Activated CD8-positive, alpha-beta T cell treated with anti-CD3 and anti-CD28 coated beads for 36 hours (primary cell): ENCODE measurements at regions of chr17 and their contacts with region 1.

Region 1: DNA sequence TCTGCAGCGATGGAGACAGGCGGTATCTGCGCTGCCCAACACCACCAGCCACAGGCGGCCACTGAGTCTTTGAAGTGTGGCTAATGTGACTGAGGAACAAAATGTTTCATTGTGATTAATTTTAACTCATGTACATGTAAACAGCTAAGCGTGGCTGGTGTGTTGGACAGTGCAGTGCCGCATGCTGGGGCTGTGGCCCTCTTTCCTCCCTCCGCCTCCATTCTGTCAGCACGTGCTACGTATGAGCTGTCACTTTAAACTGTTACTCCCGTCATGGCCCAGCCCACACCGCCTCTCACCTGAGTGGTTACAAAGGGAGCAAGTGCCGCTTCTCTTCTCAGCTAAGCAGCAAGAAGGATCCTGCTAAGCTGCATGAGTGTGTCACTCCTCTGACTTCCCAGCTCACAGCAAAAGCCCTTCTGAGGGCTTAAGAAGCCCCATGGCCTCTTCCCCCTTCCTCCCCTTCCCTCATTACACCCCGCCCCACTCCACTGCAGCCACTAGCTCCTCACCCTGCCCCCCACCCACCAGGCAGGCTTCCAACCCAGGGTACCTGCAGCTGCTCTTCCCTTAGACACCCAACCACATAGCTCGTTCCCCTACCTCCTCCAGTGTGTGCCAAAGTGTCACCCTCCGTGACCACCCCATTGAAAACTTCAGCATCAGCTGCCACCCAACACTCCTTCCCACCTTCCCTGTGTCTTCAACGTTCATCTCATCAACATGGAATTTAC is 15.0 kb downstream of the HASPIN start:
- DNase-seq: peak; percentile 93
- ATAC-seq: peak; percentile 87
- H3K4me3 Mint-ChIP-seq: no peak overlapping the region
- H3K27ac Mint-ChIP-seq: peak overlapping the region; percentile 26
- H3K4me1 Mint-ChIP-seq: peaks cover 33% of the 10 kb centered on the region
- H3K27me3 Mint-ChIP-seq: no peaks in the 10 kb centered on the region
- CTCF ChIP-seq: no peak

Region 2: DNA sequence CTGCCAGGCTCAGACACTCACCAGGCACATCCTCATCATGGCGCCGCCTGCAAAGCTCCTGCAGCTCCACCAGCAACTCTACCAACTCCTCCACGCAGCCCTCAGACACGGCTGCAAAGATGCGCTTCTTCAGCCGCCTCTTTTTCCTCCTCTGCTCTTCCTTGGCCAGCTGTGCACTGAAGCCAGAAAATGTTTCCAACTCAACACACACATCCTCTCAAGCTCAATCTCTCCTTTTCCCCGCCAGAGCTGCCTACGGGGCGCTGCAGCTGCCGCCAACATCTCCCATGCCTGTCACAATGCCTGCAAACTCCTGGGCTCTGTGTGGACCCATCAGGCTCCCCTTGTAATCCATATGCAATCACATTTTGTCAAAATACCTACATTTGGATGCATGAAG is 195.3 kb before region 1 on chr17:
- CTCF ChIA-PET with region 1: no interaction called
- POLR2A ChIA-PET with region 1: no interaction called
- intact Hi-C with region 1: no loop called
- DNase-seq: no peak
- ATAC-seq: no peak
- H3K4me3 Mint-ChIP-seq: no peak overlapping the region
- H3K27ac Mint-ChIP-seq: no peak overlapping the region
- H3K4me1 Mint-ChIP-seq: peaks cover 3% of the 10 kb centered on the region
- H3K27me3 Mint-ChIP-seq: peaks cover 3% of the 10 kb centered on the region
- CTCF ChIP-seq: no peak

Region 3: GRCh38 chr17:3594051-3594800 is 144.5 kb before region 1 on chr17:
- CTCF ChIA-PET with region 1: no interaction called
- POLR2A ChIA-PET with region 1: no interaction called
- intact Hi-C with region 1: no loop called
- DNase-seq: no peak
- ATAC-seq: no peak
- H3K4me3 Mint-ChIP-seq: no peak overlapping the region
- H3K27ac Mint-ChIP-seq: no peak overlapping the region
- H3K4me1 Mint-ChIP-seq: no peaks in the 10 kb centered on the region
- H3K27me3 Mint-ChIP-seq: no peaks in the 10 kb centered on the region
- CTCF ChIP-seq: no peak

Region 4: DNA sequence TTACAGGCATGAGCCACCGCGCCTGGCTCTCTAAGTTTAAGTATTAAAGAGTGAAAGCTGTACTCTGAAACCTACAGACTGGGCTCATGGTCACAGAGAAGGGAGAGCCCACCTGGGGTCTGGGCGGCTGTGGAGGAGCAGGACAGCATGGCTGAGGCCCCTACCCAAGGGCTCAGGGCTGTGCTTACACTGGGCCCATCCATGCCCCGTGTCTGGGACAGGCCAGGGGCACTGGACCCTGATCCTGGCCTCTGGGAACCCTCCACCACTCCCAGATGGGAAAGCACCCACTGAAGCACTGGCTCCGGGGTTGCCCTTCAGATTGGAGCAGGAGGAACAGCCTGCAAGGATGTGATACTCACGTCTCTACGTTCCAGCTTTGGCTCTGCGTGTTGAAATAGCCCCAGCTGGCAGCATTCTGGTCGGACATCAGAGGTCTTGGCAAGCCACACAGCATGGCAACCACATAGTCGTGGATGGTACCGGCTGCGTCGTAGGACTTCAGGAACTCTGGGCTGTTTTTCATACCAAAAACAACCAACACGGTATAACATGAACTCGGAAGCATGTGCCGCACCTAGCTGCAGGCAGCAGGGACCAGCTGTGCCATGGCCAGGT is 115.6 kb before region 1 on chr17:
- CTCF ChIA-PET with region 1: no interaction called
- POLR2A ChIA-PET with region 1: no interaction called
- intact Hi-C with region 1: no loop called
- DNase-seq: no peak
- ATAC-seq: no peak
- H3K4me3 Mint-ChIP-seq: no peak overlapping the region
- H3K27ac Mint-ChIP-seq: no peak overlapping the region
- H3K4me1 Mint-ChIP-seq: no peaks in the 10 kb centered on the region
- H3K27me3 Mint-ChIP-seq: no peaks in the 10 kb centered on the region
- CTCF ChIP-seq: no peak

Region 5: GRCh38 chr17:3683054-3683511 is 55.6 kb before region 1 on chr17:
- CTCF ChIA-PET with region 1: interaction called, 20 read pairs
- POLR2A ChIA-PET with region 1: no interaction called
- intact Hi-C with region 1: no loop called
- DNase-seq: peak; percentile 65
- ATAC-seq: peak; percentile 98
- H3K4me3 Mint-ChIP-seq: no peak overlapping the region
- H3K27ac Mint-ChIP-seq: no peak overlapping the region
- H3K4me1 Mint-ChIP-seq: peaks cover 7% of the 10 kb centered on the region
- H3K27me3 Mint-ChIP-seq: no peaks in the 10 kb centered on the region
- CTCF ChIP-seq: peak; percentile 96

Region 6: DNA sequence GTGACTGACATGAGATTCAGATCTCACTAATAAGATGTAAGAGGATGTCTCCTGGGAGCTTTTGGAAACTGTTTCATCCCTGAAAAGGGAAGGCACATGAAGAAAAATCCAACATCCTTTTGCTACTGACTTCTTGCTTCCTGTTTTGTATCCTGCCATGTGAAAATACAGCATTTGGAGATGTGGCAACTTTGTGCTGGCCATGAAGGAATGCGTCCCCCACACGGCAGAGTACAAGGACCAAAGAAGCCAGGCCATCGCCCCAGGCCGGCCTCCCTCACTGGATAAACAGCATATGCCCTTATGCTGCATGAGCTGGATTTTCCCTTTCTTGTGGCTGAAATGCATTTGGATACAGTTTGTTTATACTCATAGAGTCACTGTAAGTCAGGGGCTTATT is 20.5 kb before region 1 on chr17:
- CTCF ChIA-PET with region 1: interaction called, 107 read pairs
- POLR2A ChIA-PET with region 1: interaction called, 4 read pairs
- intact Hi-C with region 1: no loop called
- DNase-seq: no peak
- ATAC-seq: no peak
- H3K4me3 Mint-ChIP-seq: no peak overlapping the region
- H3K27ac Mint-ChIP-seq: no peak overlapping the region
- H3K4me1 Mint-ChIP-seq: peaks cover 41% of the 10 kb centered on the region
- H3K27me3 Mint-ChIP-seq: no peaks in the 10 kb centered on the region
- CTCF ChIP-seq: no peak

Region 7: GRCh38 chr17:3762922-3763776 is 24.4 kb after region 1 on chr17:
- CTCF ChIA-PET with region 1: interaction called, 24 read pairs
- POLR2A ChIA-PET with region 1: interaction called, 7 read pairs
- intact Hi-C with region 1: no loop called
- DNase-seq: peak; percentile 79
- ATAC-seq: peak; percentile 67
- H3K4me3 Mint-ChIP-seq: peak overlapping the region; percentile 43
- H3K27ac Mint-ChIP-seq: peak overlapping the region; percentile 97
- H3K4me1 Mint-ChIP-seq: peaks cover 53% of the 10 kb centered on the region
- H3K27me3 Mint-ChIP-seq: peaks cover 6% of the 10 kb centered on the region
- CTCF ChIP-seq: no peak

Region 8: DNA sequence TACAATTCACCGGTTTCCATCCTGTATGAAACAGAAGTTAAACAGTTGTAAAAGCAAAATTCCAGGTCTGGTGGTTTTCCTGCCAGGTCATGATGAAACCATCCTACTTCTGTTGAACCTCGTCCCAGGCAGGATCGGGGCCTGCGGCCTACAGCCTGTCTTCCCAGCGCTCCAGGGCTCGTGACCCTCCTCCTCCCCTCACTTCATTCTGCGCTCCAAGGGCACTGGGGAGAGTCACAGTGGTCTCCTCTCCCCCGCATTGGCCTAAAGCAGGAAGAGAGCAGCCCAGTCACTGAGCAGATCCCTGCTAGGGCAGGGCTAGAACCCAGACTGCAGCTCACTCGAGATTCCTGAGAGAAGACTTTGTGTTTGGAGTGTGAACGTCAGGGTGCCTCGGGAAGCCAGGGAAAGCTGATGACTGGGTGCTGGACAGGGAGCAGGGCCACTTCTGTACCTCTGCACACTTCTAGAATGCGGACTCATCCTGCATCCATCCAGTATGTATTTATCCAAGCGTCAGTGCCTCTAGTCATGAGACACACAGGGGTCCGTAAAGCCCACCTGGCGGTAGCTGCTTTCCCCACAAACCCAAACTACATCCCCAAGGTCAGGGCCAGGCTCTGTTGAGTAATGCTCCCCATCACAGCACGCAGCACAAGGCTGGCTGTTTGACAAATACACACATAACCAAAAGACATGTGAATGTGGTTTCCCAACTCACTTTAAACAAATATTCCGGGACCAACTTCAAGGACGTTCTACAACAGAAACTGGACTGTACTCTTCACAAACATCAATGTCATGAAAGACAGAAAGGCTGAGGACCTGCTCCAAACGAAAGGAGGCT is 64.0 kb after region 1 on chr17:
- CTCF ChIA-PET with region 1: interaction called, 57 read pairs
- POLR2A ChIA-PET with region 1: interaction called, 5 read pairs
- intact Hi-C with region 1: loop called (anchors 5 kb)
- DNase-seq: no peak
- ATAC-seq: no peak
- H3K4me3 Mint-ChIP-seq: no peak overlapping the region
- H3K27ac Mint-ChIP-seq: no peak overlapping the region
- H3K4me1 Mint-ChIP-seq: peaks cover 37% of the 10 kb centered on the region
- H3K27me3 Mint-ChIP-seq: no peaks in the 10 kb centered on the region
- CTCF ChIP-seq: no peak

Region 9: DNA sequence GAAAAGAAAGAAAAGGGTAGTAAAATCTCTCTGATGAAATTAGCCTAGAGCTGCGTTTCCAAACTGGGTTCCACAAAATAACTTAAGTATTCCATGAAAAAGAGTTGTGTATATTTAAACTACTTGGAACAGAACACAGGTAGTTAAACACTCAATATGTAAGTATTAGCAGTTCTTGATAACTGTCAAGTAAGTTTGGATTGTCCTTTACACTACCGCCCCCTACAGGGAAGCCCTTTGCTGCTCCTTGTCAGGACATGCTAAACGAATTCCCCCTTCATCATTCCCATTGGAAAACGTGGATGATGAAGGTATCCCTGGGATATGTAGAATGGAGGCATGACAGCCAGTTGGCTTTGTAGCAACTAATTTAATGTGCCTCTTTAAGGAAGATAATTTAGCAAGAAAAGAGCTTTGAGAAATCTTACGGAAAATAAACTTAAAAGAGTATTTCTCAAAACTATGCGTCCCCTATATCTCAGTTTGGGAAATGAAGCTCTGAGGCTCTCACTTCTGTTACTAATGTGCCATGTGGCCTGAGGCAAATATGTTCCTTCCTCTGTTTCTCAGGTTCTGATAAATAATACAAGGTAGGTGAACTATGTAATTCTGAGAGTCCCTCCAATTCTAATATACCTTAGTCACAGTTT is 88.5 kb after region 1 on chr17:
- CTCF ChIA-PET with region 1: interaction called, 367 read pairs
- POLR2A ChIA-PET with region 1: interaction called, 33 read pairs
- intact Hi-C with region 1: loop called (anchors 1 kb)
- DNase-seq: peak; percentile 89
- ATAC-seq: no peak
- H3K4me3 Mint-ChIP-seq: no peak overlapping the region
- H3K27ac Mint-ChIP-seq: peak overlapping the region; percentile 25
- H3K4me1 Mint-ChIP-seq: peaks cover 9% of the 10 kb centered on the region
- H3K27me3 Mint-ChIP-seq: no peaks in the 10 kb centered on the region
- CTCF ChIP-seq: peak; percentile 97

Region 10: GRCh38 chr17:3865176-3865575 is 126.4 kb after region 1 on chr17:
- CTCF ChIA-PET with region 1: interaction called, 17 read pairs
- POLR2A ChIA-PET with region 1: no interaction called
- intact Hi-C with region 1: no loop called
- DNase-seq: no peak
- ATAC-seq: no peak
- H3K4me3 Mint-ChIP-seq: no peak overlapping the region
- H3K27ac Mint-ChIP-seq: no peak overlapping the region
- H3K4me1 Mint-ChIP-seq: no peaks in the 10 kb centered on the region
- H3K27me3 Mint-ChIP-seq: no peaks in the 10 kb centered on the region
- CTCF ChIP-seq: no peak

Region 11: DNA sequence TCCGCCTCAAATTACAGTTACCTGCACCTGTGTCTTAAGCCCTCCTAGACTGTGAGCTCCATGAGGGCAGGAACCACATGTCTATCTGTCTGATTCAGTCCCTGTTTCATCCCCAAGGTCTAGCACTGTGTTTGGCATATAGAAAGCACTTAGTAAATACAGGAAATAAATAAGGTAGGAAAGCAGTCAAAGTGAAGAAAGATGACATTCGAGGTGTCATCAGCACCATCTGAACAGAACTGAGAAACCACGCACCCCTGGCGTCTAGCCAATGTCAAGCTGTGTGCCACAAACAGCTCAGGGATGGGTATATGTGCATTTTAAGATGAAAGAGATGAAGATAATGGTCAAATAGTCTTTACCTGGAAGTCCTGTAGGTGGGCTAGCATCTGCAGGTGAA is 305.1 kb after region 1 on chr17:
- CTCF ChIA-PET with region 1: no interaction called
- POLR2A ChIA-PET with region 1: no interaction called
- intact Hi-C with region 1: no loop called
- DNase-seq: peak; percentile 81
- ATAC-seq: peak; percentile 86
- H3K4me3 Mint-ChIP-seq: no peak overlapping the region
- H3K27ac Mint-ChIP-seq: peak overlapping the region; percentile 79
- H3K4me1 Mint-ChIP-seq: peaks cover 21% of the 10 kb centered on the region
- H3K27me3 Mint-ChIP-seq: no peaks in the 10 kb centered on the region
- CTCF ChIP-seq: no peak